Cardiac septum (tissue), 1 donor: ENCODE measurements at regions of chr1 and their contacts with region 1.

Region 1: GRCh38 chr1:97820470-97821188 is 100.2 kb downstream of the DPYD start:
- DNase-seq: no peak

Region 2: GRCh38 chr1:97243973-97244560 is 576.6 kb before region 1 on chr1:
- intact Hi-C with region 1: loop called (anchors 10 kb)
- DNase-seq: no peak

Region 3: DNA sequence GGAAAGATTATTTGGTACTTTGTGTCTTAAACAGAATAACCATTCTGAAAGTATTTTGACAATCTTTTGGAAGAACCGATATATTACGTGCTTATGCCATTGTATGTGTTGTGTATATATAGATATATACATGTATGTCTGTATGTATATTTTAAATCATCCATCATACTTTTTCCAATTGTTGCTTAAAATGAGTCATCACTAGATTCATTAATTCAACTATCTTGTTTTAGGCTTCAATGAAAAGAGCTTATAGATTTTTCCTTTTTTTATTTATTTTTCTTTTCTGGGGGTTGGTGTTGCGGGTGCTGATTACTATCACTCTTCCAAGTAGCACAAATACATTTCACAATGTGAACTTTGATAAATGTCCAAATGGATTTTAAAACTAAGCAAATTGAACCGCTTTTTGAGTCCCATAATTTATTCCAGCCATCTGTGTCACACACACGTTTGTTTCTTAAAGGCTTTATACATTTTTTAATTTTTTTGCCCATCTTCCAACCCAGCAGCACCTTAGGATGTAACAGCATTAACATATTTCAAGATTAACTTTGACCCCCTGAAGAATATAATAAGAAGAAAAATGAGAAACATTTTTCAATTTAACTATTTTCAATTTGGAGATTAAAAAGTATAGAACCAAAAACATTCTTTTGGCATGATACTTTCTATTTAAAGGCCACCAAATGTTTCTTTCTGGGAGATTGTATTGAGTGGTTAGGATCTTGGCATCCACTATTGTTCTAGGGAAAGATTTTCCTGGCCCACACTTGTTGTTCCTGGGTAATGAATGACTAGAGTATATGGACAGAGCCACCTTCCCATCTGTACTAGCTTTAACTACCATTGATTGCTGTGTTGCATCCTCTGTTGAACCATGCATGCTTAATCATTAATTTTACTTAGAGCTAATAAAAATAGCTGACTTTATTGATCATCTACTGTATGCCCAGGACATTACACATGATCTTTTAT is 109.5 kb after region 1 on chr1:
- intact Hi-C with region 1: no loop called
- DNase-seq: no peak